ENCODE measurements at regions of chr13 and their contacts with region 1.

Region 1: GRCh38 chr13:37109051-37109678 is 3.7 kb upstream of the CSNK1A1L start:
- DNase-seq: no peak

Region 2: GRCh38 chr13:36758345-36758744 is 350.8 kb before region 1 on chr13:
- intact Hi-C with region 1: loop called in 1 of 2 experiments (anchors 5 kb)
- DNase-seq: no peak

Region 3: DNA sequence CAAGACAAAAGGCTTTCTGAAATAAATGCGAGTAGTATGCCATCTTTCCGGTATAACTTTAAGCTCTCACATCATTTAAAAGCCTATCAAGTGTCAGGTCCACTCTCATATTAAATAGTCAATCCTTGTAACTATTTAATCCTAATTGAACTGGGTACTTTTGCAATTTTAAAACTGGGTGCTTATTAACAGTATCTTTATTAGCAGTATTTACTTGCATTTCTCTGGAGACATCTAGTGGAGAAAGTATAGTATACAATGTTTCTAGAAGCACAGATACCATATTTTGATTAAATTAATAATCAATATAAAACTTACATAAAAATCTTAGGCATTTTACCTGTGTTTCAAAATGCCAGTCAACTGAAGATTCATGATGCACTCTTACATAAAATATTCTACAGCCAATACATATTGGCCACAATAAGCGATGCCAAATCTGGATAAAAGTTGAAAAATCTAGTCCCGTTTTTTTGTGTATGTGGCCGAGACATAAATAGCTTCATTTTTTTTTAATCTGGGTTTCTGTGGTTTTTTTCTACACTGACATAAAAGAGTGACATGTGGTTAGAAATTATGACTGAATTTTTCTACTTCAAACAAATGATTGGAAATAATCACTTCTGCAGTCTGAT is 493.7 kb after region 1 on chr13:
- intact Hi-C with region 1: loop called in 1 of 2 experiments (anchors 10 kb)
- DNase-seq: no peak